ENCODE measurements at regions of chr18 and their contacts with region 1.

Region 1: DNA sequence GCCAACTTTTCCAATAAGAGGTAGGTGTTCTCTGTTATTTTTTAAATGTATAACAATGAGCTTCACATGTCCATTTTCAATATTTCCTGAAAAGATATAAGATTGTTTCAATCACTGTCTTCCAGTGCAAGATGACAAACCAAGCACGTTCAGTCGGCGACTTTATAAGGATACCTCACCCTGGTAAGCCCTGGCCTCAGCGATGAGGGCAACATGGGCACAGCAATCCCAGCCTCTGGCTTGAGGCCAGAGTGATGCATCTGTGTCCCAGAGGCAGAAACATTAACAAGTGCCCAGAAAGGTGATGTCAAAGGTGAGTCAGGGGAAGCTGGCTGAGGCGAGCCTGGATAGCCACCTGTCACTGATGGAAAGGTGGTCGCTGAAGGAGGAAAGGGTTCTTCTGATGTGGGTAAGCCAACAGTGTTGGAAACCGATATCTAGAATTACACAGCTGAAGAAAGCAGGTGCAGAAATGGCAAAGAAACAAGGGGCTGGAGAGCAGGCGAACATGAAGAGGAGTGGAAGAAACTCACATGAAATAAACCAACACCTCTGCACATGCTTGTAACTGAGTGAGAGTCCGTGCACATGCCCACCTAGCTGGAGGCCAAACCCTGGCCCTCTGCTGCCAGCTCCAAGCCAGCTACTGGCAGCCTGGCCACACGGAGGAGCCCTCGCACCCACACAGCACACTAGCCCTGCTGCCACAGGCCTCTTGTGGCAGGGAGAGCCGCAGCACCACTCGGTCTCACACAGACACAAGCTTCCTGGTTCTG is 65.5 kb downstream of the FBXO15 start:
- DNase-seq: no peak
- ATAC-seq: peak; percentile 99
- H3K4me3 Mint-ChIP-seq: peak overlapping the region; percentile 58
- H3K27ac Mint-ChIP-seq: peak overlapping the region; percentile 84
- H3K4me1 Mint-ChIP-seq: peaks cover 19% of the 10 kb centered on the region
- H3K27me3 Mint-ChIP-seq: no peaks in the 10 kb centered on the region
- CTCF ChIP-seq: no peak

Region 2: GRCh38 chr18:73952296-73952946 is 129.7 kb before region 1 on chr18:
- CTCF ChIA-PET with region 1: no interaction called
- POLR2A ChIA-PET with region 1: no interaction called
- intact Hi-C with region 1: no loop called
- DNase-seq: no peak
- ATAC-seq: no peak
- H3K4me3 Mint-ChIP-seq: no peak overlapping the region
- H3K27ac Mint-ChIP-seq: no peak overlapping the region
- H3K4me1 Mint-ChIP-seq: peaks cover 23% of the 10 kb centered on the region
- H3K27me3 Mint-ChIP-seq: no peaks in the 10 kb centered on the region
- CTCF ChIP-seq: no peak

Region 3: GRCh38 chr18:74040459-74041332 is 41.5 kb before region 1 on chr18:
- CTCF ChIA-PET with region 1: no interaction called
- POLR2A ChIA-PET with region 1: no interaction called
- intact Hi-C with region 1: loop called (anchors 1 kb)
- DNase-seq: peak; percentile 49
- ATAC-seq: peak; percentile 69
- H3K4me3 Mint-ChIP-seq: no peak overlapping the region
- H3K27ac Mint-ChIP-seq: no peak overlapping the region
- H3K4me1 Mint-ChIP-seq: peaks cover 16% of the 10 kb centered on the region
- H3K27me3 Mint-ChIP-seq: no peaks in the 10 kb centered on the region
- CTCF ChIP-seq: no peak

Region 4: GRCh38 chr18:74063023-74063422 is 19.1 kb before region 1 on chr18:
- CTCF ChIA-PET with region 1: interaction called, 21 read pairs
- POLR2A ChIA-PET with region 1: interaction called, 24 read pairs
- intact Hi-C with region 1: loop called (anchors 2 kb)
- DNase-seq: no peak
- ATAC-seq: peak; percentile 76
- H3K4me3 Mint-ChIP-seq: peak overlapping the region; percentile 12
- H3K27ac Mint-ChIP-seq: peak overlapping the region; percentile 85
- H3K4me1 Mint-ChIP-seq: peaks cover 57% of the 10 kb centered on the region
- H3K27me3 Mint-ChIP-seq: peaks cover 9% of the 10 kb centered on the region
- CTCF ChIP-seq: no peak

Region 5: DNA sequence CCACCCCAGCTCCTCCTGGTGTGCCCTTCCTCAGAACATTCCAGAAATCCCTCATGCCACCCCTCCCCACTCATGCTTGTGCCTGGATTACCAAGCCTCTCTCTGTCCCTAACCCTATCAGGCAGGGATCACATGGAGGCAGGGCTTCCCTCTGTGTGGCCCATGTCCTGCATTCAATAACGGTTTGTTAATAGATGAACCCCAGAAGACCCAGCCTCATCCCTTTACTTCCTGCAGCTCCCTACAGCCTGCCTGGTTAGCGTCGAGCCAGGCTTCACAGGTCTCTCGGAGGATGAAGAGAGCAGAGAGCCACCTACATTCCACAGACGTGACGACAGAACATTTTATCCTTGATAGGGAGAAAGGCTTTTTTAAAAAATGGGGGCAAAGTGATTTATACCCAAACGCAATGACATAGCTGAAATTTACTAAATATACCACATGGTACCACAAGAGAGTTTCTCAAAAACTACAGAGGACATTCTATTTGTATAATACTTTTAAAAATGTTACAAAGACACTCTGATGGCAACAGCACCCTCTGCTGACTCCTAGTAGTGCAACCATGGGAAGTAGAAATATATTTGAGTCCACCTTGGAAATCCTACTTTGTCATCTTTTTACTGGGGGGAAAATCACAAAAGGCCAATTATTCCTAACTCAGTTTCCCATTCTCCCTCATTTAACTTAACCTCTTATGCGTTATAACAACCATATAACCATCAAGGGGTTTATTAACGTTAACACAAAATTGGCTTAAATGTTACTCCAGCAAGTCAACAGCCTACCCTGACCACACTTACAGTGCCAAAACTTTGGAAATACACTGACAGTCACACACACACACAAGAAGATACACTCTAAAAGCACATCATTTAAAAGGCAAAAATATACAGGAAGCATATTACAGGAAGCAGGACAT is 34.7 kb after region 1 on chr18:
- CTCF ChIA-PET with region 1: interaction called, 7 read pairs
- POLR2A ChIA-PET with region 1: no interaction called
- intact Hi-C with region 1: loop called (anchors 1 kb)
- DNase-seq: no peak
- ATAC-seq: no peak
- H3K4me3 Mint-ChIP-seq: no peak overlapping the region
- H3K27ac Mint-ChIP-seq: no peak overlapping the region
- H3K4me1 Mint-ChIP-seq: peaks cover 9% of the 10 kb centered on the region
- H3K27me3 Mint-ChIP-seq: peaks cover 5% of the 10 kb centered on the region
- CTCF ChIP-seq: no peak

Region 6: DNA sequence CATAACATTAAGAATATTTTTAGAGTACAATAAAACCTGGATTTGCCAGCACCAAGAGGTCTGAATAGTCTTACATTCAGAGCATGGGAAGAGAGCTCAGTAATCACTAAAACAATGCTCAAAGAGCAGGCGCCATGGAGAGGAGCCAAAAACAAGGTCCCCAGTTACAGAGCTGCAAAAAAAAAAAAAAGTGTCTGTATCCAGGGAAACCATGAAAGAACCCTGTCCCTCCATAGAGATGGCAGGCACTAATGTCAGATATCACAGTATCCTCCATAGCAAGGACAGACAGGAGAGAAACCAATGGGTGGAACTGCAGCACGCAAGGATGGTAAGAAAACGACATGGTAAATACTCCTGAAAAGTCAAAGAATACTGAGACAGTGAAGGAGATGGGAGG is 46.0 kb after region 1 on chr18:
- CTCF ChIA-PET with region 1: no interaction called
- POLR2A ChIA-PET with region 1: no interaction called
- intact Hi-C with region 1: no loop called
- DNase-seq: no peak
- ATAC-seq: no peak
- H3K4me3 Mint-ChIP-seq: no peak overlapping the region
- H3K27ac Mint-ChIP-seq: no peak overlapping the region
- H3K4me1 Mint-ChIP-seq: no peaks in the 10 kb centered on the region
- H3K27me3 Mint-ChIP-seq: peaks cover 2% of the 10 kb centered on the region
- CTCF ChIP-seq: no peak

Region 7: DNA sequence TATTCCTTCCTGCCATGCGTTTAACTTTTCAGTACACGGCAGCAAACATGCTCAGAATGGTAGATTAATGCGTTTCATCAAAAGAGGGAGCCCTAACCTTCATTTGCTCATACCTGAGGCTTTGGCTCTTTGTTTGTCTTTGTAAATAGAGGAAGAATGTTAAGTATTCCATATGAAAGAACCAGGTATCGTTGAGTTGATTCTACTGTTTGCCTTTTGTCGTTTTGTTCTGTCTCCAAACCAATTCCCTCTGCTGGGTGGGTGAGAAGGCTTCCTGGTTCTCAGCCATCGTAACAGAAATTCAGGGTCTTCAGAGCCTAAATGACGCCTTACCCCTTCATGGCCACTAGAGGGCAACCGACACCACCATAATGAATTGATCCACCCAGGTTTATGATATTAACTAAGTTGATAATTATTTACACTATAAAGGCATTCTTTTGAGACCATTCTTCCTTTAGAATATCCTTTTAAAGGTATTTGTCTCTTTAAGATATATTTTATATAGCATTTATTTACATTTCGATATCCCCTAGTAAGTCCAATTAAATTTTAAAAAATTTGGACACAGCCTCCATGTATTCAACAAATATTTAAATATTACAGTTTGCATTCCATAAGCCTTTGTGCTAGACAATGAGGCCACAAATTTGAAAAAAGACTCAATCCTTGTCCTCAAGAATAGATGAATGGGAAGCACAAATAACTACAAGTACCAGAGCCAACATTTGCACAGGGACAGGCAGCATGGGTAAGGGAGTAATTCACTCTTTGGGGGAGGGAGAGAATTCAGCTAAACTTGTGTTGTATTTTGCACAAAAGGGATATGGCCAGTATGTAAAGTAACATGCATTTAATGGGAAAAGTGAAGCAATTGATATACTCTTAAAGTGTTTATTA is 114.3 kb after region 1 on chr18:
- CTCF ChIA-PET with region 1: no interaction called
- POLR2A ChIA-PET with region 1: no interaction called
- intact Hi-C with region 1: loop called (anchors 1 kb)
- DNase-seq: no peak
- ATAC-seq: peak; percentile 95
- H3K4me3 Mint-ChIP-seq: peak overlapping the region; percentile 78
- H3K27ac Mint-ChIP-seq: peak overlapping the region; percentile 79
- H3K4me1 Mint-ChIP-seq: peaks cover 22% of the 10 kb centered on the region
- H3K27me3 Mint-ChIP-seq: peaks cover 8% of the 10 kb centered on the region
- CTCF ChIP-seq: no peak

Region 8: DNA sequence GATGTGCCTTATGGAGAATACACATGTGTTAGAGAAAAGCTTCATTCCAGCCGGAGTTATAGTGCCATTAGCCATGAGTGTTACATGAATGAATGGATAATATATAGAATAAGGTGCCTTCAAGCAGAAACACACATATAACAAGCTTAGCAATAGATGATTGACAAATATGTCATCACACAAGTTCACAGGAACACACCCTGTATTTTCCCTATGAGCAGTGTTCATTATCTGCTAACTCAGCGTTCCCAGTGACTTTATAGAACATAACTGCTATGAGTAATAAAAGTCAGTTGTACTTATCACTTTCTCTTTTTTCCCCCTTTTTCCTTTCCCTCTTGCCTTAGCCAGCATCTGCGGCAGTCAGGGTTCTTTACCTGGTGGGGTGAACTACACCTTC is 131.3 kb after region 1 on chr18:
- CTCF ChIA-PET with region 1: no interaction called
- POLR2A ChIA-PET with region 1: no interaction called
- intact Hi-C with region 1: no loop called
- DNase-seq: no peak
- ATAC-seq: no peak
- H3K4me3 Mint-ChIP-seq: no peak overlapping the region
- H3K27ac Mint-ChIP-seq: no peak overlapping the region
- H3K4me1 Mint-ChIP-seq: no peaks in the 10 kb centered on the region
- H3K27me3 Mint-ChIP-seq: peaks cover 2% of the 10 kb centered on the region
- CTCF ChIP-seq: no peak

Region 9: DNA sequence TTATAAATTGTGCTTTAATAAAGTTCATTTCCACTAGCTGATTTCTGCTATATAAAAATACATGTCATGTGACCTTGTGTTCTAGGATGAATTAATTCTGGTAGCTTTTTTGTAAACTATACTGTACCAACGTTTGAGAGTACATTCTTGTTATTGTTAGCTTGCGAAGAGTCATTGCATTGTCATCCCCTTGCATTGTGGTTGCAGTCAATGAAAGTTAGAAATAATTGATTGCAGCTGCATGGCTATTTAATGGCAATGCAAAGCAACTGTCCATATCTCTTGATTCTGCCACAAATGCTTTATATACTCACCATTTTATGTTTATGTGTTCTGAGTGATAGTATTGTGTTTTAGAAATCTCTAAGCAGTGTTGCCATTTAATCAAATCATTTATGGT is 607.1 kb after region 1 on chr18:
- CTCF ChIA-PET with region 1: no interaction called
- POLR2A ChIA-PET with region 1: no interaction called
- intact Hi-C with region 1: no loop called
- DNase-seq: no peak
- ATAC-seq: no peak
- H3K4me3 Mint-ChIP-seq: no peak overlapping the region
- H3K27ac Mint-ChIP-seq: no peak overlapping the region
- H3K4me1 Mint-ChIP-seq: no peaks in the 10 kb centered on the region
- H3K27me3 Mint-ChIP-seq: no peaks in the 10 kb centered on the region
- CTCF ChIP-seq: no peak